Thyroid gland (tissue), 4 donors: ENCODE measurements at regions of chr13 and their contacts with region 1.

Region 1: GRCh38 chr13:78658635-78659449 is at the start of gene OBI1:
- DNase-seq: peak; percentile 92 to 93
- H3K4me3 ChIP-seq: peak within 1 kb of the TSS; percentile 62 to 85 (median 70)
- H3K27ac ChIP-seq: peak within 1 kb of the TSS in 2 of 3 donors; percentile 55 to 65
- H3K4me1 ChIP-seq: peaks cover 0 to 7% of the 10 kb centered on the region in 2 donors
- H3K27me3 ChIP-seq: no peaks in the 10 kb centered on the region
- CTCF ChIP-seq: no peak
- POLR2A ChIP-seq: peak in 1 of 2 donors; percentile 62
- total RNA-seq, gene OBI1: 10.1 to 17.3 (median 13.5) TPM

Region 2: GRCh38 chr13:78603240-78603957 is 55.4 kb before region 1 on chr13 and contains the start of gene POU4F1:
- intact Hi-C with region 1: loop called (anchors 10 kb)
- DNase-seq: peak; percentile 32 to 38
- H3K4me3 ChIP-seq: peak within 1 kb of the TSS in 1 of 3 donors; percentile 25
- H3K27ac ChIP-seq: no peak within 1 kb of the TSS
- H3K4me1 ChIP-seq: peaks cover 15 to 35% of the 10 kb centered on the region in 2 donors
- H3K27me3 ChIP-seq: peaks cover 77% of the 10 kb centered on the region
- CTCF ChIP-seq: no peak
- POLR2A ChIP-seq: no peak
- total RNA-seq, gene POU4F1: not detected

Region 3: GRCh38 chr13:78852709-78853108 is 193.9 kb after region 1 on chr13:
- intact Hi-C with region 1: no loop called
- DNase-seq: no peak
- H3K4me3 ChIP-seq: no peak overlapping the region
- H3K27ac ChIP-seq: no peak overlapping the region
- H3K4me1 ChIP-seq: no peaks in the 10 kb centered on the region
- H3K27me3 ChIP-seq: no peaks in the 10 kb centered on the region
- CTCF ChIP-seq: no peak
- POLR2A ChIP-seq: no peak